Thyroid gland (tissue), 4 donors: ENCODE measurements at regions of chr1 and their contacts with region 1.

Region 1: GRCh38 chr1:91742848-91743292 is 143.1 kb downstream of the TGFBR3 start:
- DNase-seq: peak; percentile 39 to 43
- H3K4me3 ChIP-seq: no peak overlapping the region
- H3K27ac ChIP-seq: peak overlapping the region in 2 of 3 donors; percentile 4 to 63
- H3K4me1 ChIP-seq: peaks cover 27 to 39% of the 10 kb centered on the region in 2 donors
- H3K27me3 ChIP-seq: no peaks in the 10 kb centered on the region
- CTCF ChIP-seq: no peak
- POLR2A ChIP-seq: no peak

Region 2: GRCh38 chr1:91546876-91547275 is 196.0 kb before region 1 on chr1:
- intact Hi-C with region 1: no loop called
- DNase-seq: peak; percentile 27 to 50
- H3K4me3 ChIP-seq: no peak overlapping the region
- H3K27ac ChIP-seq: no peak overlapping the region
- H3K4me1 ChIP-seq: peaks cover 0 to 6% of the 10 kb centered on the region in 2 donors
- H3K27me3 ChIP-seq: no peaks in the 10 kb centered on the region
- CTCF ChIP-seq: peak in 1 of 6 experiments; percentile 9
- POLR2A ChIP-seq: no peak

Region 3: GRCh38 chr1:91622616-91623015 is 120.3 kb before region 1 on chr1:
- intact Hi-C with region 1: loop called (anchors 10 kb)
- DNase-seq: peak; percentile 90 to 91
- H3K4me3 ChIP-seq: no peak overlapping the region
- H3K27ac ChIP-seq: peak overlapping the region; percentile 35 to 73 (median 63)
- H3K4me1 ChIP-seq: peaks cover 31 to 33% of the 10 kb centered on the region in 2 donors
- H3K27me3 ChIP-seq: no peaks in the 10 kb centered on the region
- CTCF ChIP-seq: no peak
- POLR2A ChIP-seq: no peak

Region 4: DNA sequence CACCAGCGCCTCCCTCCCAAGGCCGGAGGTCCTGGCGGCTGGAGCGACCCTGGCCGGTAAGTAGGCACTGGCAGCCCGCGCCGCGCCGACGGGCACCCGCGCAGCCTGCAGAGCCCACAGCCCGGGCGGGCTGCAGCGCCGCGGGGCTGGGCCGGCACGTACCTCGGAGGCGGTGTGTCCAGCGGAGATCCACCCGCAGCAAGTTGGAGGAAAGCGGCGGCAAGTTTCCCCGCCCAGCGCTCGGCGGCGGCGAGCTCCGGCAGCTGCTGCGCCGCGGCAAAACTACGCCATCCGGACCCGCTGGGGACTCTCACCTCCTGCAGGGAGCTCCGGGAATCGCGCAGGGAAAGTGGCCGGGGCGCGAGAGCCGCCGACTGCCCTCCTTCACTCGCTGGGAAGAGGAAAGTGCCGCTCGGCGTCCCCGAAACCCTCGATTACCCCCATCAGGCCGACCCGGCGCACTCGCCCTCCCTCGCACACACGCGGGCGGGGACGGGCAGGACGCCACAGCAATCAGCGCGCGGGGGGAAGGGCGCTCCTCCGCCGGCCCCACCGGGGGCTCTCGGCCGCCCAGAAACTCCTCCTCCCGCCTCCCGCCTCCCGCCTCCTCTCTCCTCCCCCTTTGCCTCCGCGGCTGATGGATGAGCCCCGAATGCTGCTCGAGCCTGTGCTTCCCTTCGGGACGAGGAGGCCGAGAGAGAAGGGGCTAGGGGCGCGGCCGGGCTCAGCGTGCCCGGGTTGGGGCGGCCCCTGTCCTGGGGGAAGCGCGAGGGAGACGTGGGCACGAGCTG is 143.0 kb after region 1 on chr1 and contains the start of gene TGFBR3:
- intact Hi-C with region 1: loop called (anchors 10 kb)
- DNase-seq: peak; percentile 96 to 97
- H3K4me3 ChIP-seq: peak within 1 kb of the TSS; percentile 60 to 83 (median 61)
- H3K27ac ChIP-seq: peak within 1 kb of the TSS; percentile 91 to 96 (median 93)
- H3K4me1 ChIP-seq: peaks cover 5 to 7% of the 10 kb centered on the region in 2 donors
- H3K27me3 ChIP-seq: no peaks in the 10 kb centered on the region
- CTCF ChIP-seq: peak in 5 of 6 experiments; percentile 29 to 71 (median 62)
- POLR2A ChIP-seq: peak in 1 of 2 donors; percentile 97
- total RNA-seq, gene TGFBR3: 37.2 to 223 (median 106) TPM